Thyroid gland (tissue), 4 donors: ENCODE measurements at regions of chr18 and their contacts with region 1.

Region 1: DNA sequence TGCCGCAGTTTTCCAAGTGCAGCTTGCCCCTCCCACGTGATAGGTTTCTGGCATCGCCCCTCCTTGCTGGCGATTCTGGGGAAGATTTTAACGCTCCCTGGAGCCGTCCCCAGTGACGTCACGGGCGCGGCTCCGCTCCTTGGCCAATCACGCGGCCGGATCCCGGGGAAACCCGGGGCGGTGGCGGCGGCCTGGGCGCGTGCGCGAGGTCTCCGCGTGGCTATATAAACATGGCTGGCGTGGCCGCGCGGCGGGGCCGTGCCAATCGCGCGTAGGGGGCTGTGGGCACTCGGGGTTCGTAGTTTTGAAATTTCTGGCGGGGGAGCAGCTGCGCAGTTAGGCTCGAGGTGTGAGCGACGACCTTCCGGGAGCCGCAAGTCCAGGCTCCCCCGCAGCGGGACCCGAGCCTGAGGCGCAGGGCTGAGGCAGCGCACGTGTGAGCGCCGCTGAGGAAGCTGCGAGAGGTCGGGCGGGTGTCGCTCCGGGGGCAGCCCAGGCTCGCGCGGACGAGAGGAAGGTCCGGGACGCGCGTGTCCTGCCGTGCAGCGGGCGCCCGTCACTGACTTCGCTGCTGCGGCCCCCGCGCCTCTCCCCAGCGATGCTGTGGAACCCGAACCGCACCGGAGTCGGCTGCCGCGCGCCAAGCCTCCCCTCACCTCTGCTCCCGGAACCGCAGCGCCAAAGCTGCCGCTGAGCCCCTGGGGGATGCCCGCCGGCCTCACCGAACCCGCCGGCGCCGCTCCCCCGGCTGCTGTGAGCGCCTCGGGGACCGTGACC is at the start of gene TAF4B:
- DNase-seq: peak; percentile 96
- H3K4me3 ChIP-seq: peak within 1 kb of the TSS; percentile 72 to 91 (median 81)
- H3K27ac ChIP-seq: peak within 1 kb of the TSS in 2 of 3 donors; percentile 45 to 64
- H3K4me1 ChIP-seq: peaks cover 7% of the 10 kb centered on the region in 2 donors
- H3K27me3 ChIP-seq: no peaks in the 10 kb centered on the region
- CTCF ChIP-seq: peak in 1 of 6 experiments; percentile 18
- POLR2A ChIP-seq: peak in 1 of 2 donors; percentile 94
- total RNA-seq, gene TAF4B: 8.7 to 12.7 (median 9.8) TPM

Region 2: GRCh38 chr18:26090130-26091046 is 136.0 kb before region 1 on chr18 and contains the start of gene SS18:
- intact Hi-C with region 1: loop called (anchors 10 kb)
- DNase-seq: peak; percentile 94 to 97
- H3K4me3 ChIP-seq: peak within 1 kb of the TSS; percentile 68 to 95 (median 94)
- H3K27ac ChIP-seq: peak within 1 kb of the TSS; percentile 92 to 95 (median 95)
- H3K4me1 ChIP-seq: peaks cover 14 to 15% of the 10 kb centered on the region in 2 donors
- H3K27me3 ChIP-seq: no peaks in the 10 kb centered on the region
- CTCF ChIP-seq: peak in 2 of 6 experiments; percentile 16 to 24
- POLR2A ChIP-seq: peak in 1 of 2 donors; percentile 65
- total RNA-seq, gene SS18: 125 to 188 (median 151) TPM